Activated CD4-positive, alpha-beta memory T cell treated with anti-CD3 and anti-CD28 coated beads, Interleukin-2, amount 10 ng/mL, durations not matched to agents 7 days and 5 days (primary cell): ENCODE measurements at regions of chr6 and their contacts with region 1.

Region 1: GRCh38 chr6:109095027-109095834 is at the start of gene CEP57L1:
- DNase-seq: peak; percentile 97
- H3K4me3 Mint-ChIP-seq: peak within 1 kb of the TSS; percentile 94
- H3K27ac Mint-ChIP-seq: peak within 1 kb of the TSS; percentile 100
- H3K4me1 Mint-ChIP-seq: peaks cover 49% of the 10 kb centered on the region
- H3K27me3 Mint-ChIP-seq: no peaks in the 10 kb centered on the region
- total RNA-seq, gene CEP57L1: 21.6 to 23.3 TPM

Region 2: DNA sequence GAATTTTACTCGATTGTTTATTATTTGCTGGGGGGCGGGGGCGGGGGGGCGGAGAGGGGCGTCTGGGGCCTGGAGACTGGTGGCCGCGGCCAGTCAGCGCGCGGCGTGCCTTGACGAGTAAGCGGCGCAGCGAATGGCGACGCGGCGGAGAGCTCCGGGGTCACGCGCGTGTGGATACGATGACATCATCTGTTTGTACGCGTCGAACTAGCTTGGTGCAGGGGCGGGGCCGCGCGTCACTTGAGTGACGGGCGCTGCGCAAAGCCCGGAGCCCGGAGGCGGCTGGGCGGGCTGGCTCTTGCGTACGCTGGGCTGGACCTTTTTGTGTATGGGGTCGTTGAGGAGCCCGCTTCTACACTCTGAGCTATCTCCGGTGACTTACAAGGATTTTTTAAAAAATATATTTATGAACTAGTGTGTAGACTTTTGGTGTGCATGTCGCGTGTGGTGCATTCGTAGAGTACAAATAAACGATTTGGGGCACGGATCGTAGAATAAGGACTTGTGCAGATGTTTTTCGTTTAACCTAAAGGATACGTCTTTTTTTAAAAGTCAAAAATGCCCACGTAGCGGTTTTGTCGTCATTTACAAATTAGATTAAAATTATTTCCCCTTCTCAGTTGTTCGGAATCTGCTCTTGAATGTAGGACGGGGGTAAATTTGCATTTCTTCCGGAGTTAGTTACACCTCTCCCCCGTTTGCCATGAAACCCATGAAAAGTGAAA is 536.7 kb before region 1 on chr6:
- CTCF ChIA-PET with region 1: interaction called, 6 read pairs
- POLR2A ChIA-PET with region 1: interaction called, 29 read pairs
- DNase-seq: peak; percentile 97
- H3K4me3 Mint-ChIP-seq: peak overlapping the region; percentile 97
- H3K27ac Mint-ChIP-seq: peak overlapping the region; percentile 98
- H3K4me1 Mint-ChIP-seq: peaks cover 28% of the 10 kb centered on the region
- H3K27me3 Mint-ChIP-seq: peaks cover 21% of the 10 kb centered on the region

Region 3: GRCh38 chr6:108902382-108902792 is 192.8 kb before region 1 on chr6:
- CTCF ChIA-PET with region 1: no interaction called
- POLR2A ChIA-PET with region 1: interaction called, 13 read pairs
- DNase-seq: no peak
- H3K4me3 Mint-ChIP-seq: no peak overlapping the region
- H3K27ac Mint-ChIP-seq: peak overlapping the region; percentile 89
- H3K4me1 Mint-ChIP-seq: peaks cover 47% of the 10 kb centered on the region
- H3K27me3 Mint-ChIP-seq: peaks cover 7% of the 10 kb centered on the region

Region 4: GRCh38 chr6:109009236-109009961 is 85.8 kb before region 1 on chr6:
- CTCF ChIA-PET with region 1: no interaction called
- POLR2A ChIA-PET with region 1: interaction called, 12 read pairs
- DNase-seq: peak; percentile 92
- H3K4me3 Mint-ChIP-seq: peak overlapping the region; percentile 88
- H3K27ac Mint-ChIP-seq: peak overlapping the region; percentile 72
- H3K4me1 Mint-ChIP-seq: peaks cover 39% of the 10 kb centered on the region
- H3K27me3 Mint-ChIP-seq: peaks cover 8% of the 10 kb centered on the region

Region 5: GRCh38 chr6:109079981-109080380 is 15.2 kb before region 1 on chr6:
- CTCF ChIA-PET with region 1: interaction called, 3 read pairs
- POLR2A ChIA-PET with region 1: interaction called, 11 read pairs
- DNase-seq: no peak
- H3K4me3 Mint-ChIP-seq: no peak overlapping the region
- H3K27ac Mint-ChIP-seq: no peak overlapping the region
- H3K4me1 Mint-ChIP-seq: peaks cover 3% of the 10 kb centered on the region
- H3K27me3 Mint-ChIP-seq: no peaks in the 10 kb centered on the region

Region 6: DNA sequence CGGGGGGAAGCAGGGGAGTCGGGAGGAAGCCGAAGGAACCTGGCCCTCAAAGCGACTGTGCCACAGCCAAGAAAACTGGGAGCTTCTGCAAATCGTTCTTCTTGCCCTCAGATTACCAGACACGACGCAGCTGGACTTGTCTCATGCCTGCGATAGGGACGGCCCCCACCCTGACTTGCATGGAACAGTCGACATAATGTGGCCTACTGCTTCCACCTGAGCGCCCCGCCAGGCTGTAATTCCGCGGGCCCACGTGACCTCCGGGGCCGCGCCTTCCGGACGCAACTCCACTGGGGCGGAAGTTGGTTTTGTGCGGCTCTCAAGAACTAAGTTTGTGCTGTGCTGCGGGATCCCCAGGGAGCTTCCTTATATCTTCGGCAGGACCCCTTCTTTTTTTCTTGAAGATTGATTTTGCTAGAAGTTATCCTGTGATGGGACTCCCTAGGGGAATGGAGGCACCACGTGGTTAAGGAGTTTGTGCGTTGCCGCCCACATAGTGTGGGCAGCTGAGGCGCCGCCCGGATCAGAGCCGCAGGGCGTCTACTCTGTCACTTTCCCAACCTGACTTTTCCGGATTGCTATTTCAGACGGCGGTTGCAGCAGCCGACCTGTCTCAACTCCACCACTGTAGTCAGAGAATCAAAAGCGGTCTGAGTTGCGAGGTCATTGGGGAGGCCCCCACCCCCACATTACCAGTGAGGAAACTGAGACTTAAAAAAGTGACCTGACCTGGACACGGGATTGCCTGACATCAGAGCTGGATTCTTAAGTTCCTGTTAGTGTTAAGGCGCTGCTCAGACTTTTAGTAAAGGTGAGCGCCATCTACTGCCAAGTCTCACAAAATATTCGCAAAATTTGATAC is 287.6 kb after region 1 on chr6:
- CTCF ChIA-PET with region 1: interaction called, 9 read pairs
- POLR2A ChIA-PET with region 1: interaction called, 73 read pairs
- DNase-seq: peak; percentile 94
- H3K4me3 Mint-ChIP-seq: peak overlapping the region; percentile 93
- H3K27ac Mint-ChIP-seq: peak overlapping the region; percentile 99
- H3K4me1 Mint-ChIP-seq: peaks cover 28% of the 10 kb centered on the region
- H3K27me3 Mint-ChIP-seq: peaks cover 3% of the 10 kb centered on the region